GM12878 (cell line): ENCODE measurements at regions of chr15 and their contacts with region 1.

Region 1: DNA sequence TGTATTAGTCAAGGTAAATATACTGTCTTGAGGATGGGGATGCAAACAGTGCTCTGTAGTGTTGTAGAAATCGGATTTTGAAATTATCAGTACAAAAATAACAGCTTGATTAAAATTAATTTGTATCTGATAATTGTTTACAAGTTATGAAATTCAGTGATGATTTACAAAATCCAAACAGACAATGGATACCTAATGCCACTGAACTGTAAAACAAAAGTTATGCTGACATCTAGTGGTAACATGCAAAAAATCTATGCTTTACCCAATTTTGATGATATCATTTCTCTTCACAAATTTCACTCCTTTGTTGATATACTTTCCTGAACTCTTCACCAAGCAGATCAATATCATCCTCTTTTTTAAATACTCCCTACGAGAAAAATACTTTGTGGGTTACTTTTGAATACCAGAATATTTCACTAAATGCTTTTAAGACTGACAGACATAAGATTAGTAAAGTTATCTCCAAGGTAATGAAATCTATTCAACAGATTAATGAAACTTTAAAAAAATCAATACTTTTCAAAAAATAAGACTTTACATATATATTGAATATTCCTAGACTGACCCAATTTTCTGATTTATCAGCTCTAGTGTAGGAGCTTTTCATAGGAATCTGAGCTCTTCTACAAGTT is 36.0 kb downstream of the MNS1 start:
- DNase-seq: peak; percentile 7
- ATAC-seq: peak; percentile 73
- H3K4me3 ChIP-seq: no peak overlapping the region
- H3K27ac ChIP-seq: no peak overlapping the region
- H3K4me1 ChIP-seq: no peaks in the 10 kb centered on the region
- H3K27me3 ChIP-seq: no peaks in the 10 kb centered on the region
- CTCF ChIP-seq: peak; percentile 25 to 66 (median 44); a peak in 4 of 6 replicates
- EP300 ChIP-seq: no peak
- POLR2A ChIP-seq: no peak
- RAD21 ChIP-seq: peak; percentile 76

Region 2: GRCh38 chr15:55661428-55661827 is 767.5 kb before region 1 on chr15:
- CTCF ChIA-PET with region 1: no interaction called
- POLR2A ChIA-PET with region 1: no interaction called
- RAD21 ChIA-PET with region 1: no interaction called
- SMC1A ChIA-PET with region 1: no interaction called
- in situ Hi-C with region 1: loop called (anchors 25 kb)
- intact Hi-C with region 1: no loop called
- DNase-seq: no peak
- ATAC-seq: no peak
- H3K4me3 ChIP-seq: no peak overlapping the region
- H3K27ac ChIP-seq: no peak overlapping the region
- H3K4me1 ChIP-seq: no peaks in the 10 kb centered on the region
- H3K27me3 ChIP-seq: no peaks in the 10 kb centered on the region
- CTCF ChIP-seq: no peak
- EP300 ChIP-seq: no peak
- POLR2A ChIP-seq: no peak
- RAD21 ChIP-seq: no peak

Region 3: DNA sequence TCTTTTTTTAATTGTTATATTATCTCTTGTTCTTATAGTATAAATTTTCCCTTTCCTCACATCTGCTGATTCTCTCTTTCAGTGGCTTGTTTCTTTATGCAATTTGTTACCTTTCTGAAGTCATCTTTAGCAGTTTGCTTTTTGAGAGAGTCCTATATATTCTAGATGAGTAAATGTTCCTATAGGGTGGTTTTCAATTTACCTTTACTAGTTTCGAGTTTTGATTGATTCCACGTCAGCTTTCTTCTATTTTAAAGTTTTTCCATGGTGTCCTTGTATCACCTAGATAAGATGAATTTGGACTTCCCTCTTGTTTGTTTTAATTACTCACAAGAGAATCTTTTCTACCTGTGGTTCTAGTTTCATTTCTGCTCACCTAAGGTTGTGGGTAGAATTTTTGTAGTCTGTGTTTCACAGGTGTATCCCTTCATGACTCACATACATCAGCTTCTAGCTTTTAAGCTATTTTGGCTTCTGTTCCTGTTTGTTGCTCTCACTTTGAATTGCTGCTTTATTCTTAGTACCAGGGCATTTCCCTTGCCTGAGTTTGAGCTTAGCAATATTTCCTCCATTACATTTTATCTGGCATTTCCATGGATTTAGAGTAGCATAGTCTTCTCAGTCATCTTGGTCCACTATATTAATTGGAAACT is 57.3 kb before region 1 on chr15:
- CTCF ChIA-PET with region 1: interaction called, 5 read pairs
- POLR2A ChIA-PET with region 1: no interaction called
- RAD21 ChIA-PET with region 1: no interaction called
- SMC1A ChIA-PET with region 1: no interaction called
- in situ Hi-C with region 1: no loop called
- intact Hi-C with region 1: loop called (anchors 5 kb)
- DNase-seq: peak; percentile 85
- ATAC-seq: peak; percentile 85
- H3K4me3 ChIP-seq: peak overlapping the region; percentile 17; the same call in 1 of the 2 replicates
- H3K27ac ChIP-seq: peak overlapping the region; percentile 95
- H3K4me1 ChIP-seq: peaks cover 7% of the 10 kb centered on the region
- H3K27me3 ChIP-seq: no peaks in the 10 kb centered on the region
- CTCF ChIP-seq: no peak
- EP300 ChIP-seq: peak; percentile 58 to 92; a peak in 2 of 4 replicates
- POLR2A ChIP-seq: no peak
- RAD21 ChIP-seq: no peak

Region 4: DNA sequence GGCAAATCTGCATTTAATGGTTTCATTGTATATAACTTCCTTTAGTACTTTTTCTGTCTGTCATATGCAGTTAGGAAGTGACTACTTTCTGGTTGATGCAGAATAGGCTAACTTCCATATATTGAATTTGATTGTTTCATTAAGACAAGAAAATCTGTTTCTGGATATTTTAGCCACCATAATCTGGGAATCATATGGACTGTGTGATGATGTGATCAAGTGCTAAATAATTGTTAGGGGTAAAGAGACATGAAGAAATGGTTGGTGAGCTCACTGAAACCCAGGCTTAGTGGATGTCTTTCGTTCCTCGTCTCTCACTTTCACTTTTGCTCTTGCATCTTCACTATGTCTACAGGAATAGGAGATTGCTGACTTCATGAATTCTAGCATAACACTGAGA is 39.5 kb after region 1 on chr15:
- CTCF ChIA-PET with region 1: no interaction called
- POLR2A ChIA-PET with region 1: no interaction called
- RAD21 ChIA-PET with region 1: no interaction called
- SMC1A ChIA-PET with region 1: no interaction called
- in situ Hi-C with region 1: no loop called
- intact Hi-C with region 1: no loop called
- DNase-seq: peak; percentile 33
- ATAC-seq: peak; percentile 68
- H3K4me3 ChIP-seq: peak overlapping the region; percentile 46; the same call in 1 of the 2 replicates
- H3K27ac ChIP-seq: no peak overlapping the region
- H3K4me1 ChIP-seq: peaks cover 9% of the 10 kb centered on the region; the same call in 1 of the 2 replicates
- H3K27me3 ChIP-seq: no peaks in the 10 kb centered on the region
- CTCF ChIP-seq: no peak
- EP300 ChIP-seq: no peak
- POLR2A ChIP-seq: no peak
- RAD21 ChIP-seq: no peak